IMR-90 (cell line): ENCODE measurements at regions of chr2 and their contacts with region 1.

Region 1: DNA sequence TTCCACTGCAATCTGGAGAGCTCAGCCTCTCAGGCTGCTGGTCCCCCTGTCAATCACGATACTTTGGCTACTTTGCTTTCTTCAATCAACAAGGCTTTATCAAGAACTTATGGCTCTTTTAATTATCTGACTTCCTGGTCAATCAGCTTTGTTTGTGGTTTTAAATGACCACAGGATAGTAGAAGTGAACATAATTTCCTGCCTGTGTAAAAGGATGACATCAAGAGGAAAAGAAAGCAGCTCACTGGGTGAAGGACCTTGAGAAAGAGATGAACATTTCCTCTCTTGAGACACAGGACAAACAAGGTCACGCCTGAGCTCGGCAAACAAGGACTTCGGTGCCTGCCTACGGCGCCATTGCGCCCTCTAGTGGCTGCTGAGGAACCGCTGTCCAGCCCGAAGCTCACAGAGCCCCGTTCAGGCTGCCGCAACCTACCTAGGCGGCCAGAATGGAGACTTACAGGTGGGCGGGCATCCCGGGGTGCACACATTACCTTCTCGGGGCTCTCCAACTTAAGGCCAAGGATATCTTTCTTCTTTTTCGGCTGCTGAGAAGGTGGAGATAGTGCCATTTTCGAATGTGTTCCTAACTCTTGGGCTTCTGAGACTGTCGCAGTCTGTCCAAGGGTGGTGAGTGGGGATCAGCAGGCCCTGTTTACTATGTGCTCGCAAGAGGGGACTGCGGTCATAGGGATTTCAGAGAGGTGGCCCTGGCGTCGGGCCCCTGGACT is 54.0 kb downstream of the IL1RL2 start:
- DNase-seq: peak; percentile 97
- ATAC-seq: peak; percentile 96
- H3K4me3 ChIP-seq: no peak overlapping the region
- H3K27ac ChIP-seq: peak overlapping the region; percentile 36; the same call in 1 of the 2 replicates
- H3K4me1 ChIP-seq: peaks cover 8% of the 10 kb centered on the region
- H3K27me3 ChIP-seq: no peaks in the 10 kb centered on the region
- CTCF ChIP-seq: peak; percentile 98
- POLR2A ChIP-seq: peak; percentile 36; the same call in 1 of the 2 replicates
- RAD21 ChIP-seq: peak; percentile 99

Region 2: GRCh38 chr2:101883863-101884262 is 356.9 kb before region 1 on chr2:
- CTCF ChIA-PET with region 1: interaction called, 6 read pairs
- POLR2A ChIA-PET with region 1: no interaction called
- dilution Hi-C with region 1: no loop called
- in situ Hi-C with region 1: loop called (anchors 10 kb)
- intact Hi-C with region 1: loop called (anchors 2 kb)
- DNase-seq: peak; percentile 59
- ATAC-seq: peak; percentile 80
- H3K4me3 ChIP-seq: no peak overlapping the region
- H3K27ac ChIP-seq: no peak overlapping the region
- H3K4me1 ChIP-seq: 0 out of 2 replicates have a peak, but pooled peaks cover 3% of the 10 kb centered on the region
- H3K27me3 ChIP-seq: no peaks in the 10 kb centered on the region
- CTCF ChIP-seq: peak; percentile 65
- POLR2A ChIP-seq: no peak
- RAD21 ChIP-seq: peak; percentile 57

Region 3: GRCh38 chr2:102033031-102033749 is 207.6 kb before region 1 on chr2:
- CTCF ChIA-PET with region 1: interaction called, 11 read pairs
- POLR2A ChIA-PET with region 1: no interaction called
- dilution Hi-C with region 1: no loop called
- in situ Hi-C with region 1: no loop called
- intact Hi-C with region 1: no loop called
- DNase-seq: peak; percentile 79
- ATAC-seq: peak; percentile 89
- H3K4me3 ChIP-seq: no peak overlapping the region
- H3K27ac ChIP-seq: peak overlapping the region; percentile 53
- H3K4me1 ChIP-seq: peaks cover 14% of the 10 kb centered on the region
- H3K27me3 ChIP-seq: no peaks in the 10 kb centered on the region
- CTCF ChIP-seq: 0 out of 2 replicates have a peak, but pooled peaks have one; percentile 13
- POLR2A ChIP-seq: no peak
- RAD21 ChIP-seq: 0 out of 2 replicates have a peak, but pooled peaks have one; percentile 2

Region 4: DNA sequence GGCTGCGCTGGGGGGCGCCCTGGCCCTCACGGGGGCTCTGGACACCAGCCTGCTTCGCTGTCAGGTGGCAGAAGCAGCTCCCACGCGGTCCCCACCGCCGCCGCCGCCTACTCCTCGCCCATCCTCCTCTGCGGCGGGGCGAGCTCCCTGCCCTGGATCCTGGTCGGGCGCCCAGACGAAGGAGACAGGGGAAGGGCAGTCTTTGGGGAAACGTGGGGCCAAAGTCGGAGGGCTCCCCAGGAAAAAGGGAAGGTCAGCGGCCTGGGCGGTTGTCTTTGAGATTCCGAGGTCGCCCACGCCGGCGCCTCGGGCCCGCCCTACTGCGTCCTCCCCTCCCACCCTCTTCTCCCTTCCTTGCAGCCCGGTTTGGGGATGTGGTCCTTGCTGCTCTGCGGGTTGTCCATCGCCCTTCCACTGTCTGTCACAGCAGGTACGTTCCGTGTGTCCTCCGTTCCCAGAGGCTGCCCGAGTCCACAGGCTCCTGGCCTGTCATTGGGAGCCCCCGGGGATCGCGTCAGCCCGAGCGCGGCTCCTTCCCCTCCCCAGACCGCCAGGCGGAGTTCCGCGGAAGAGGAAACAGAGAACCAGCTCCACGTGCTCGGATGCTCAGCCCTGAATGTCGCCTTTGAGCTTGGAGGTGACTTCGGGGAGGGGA is 53.2 kb before region 1 on chr2:
- CTCF ChIA-PET with region 1: interaction called, 5 read pairs
- POLR2A ChIA-PET with region 1: no interaction called
- dilution Hi-C with region 1: no loop called
- in situ Hi-C with region 1: no loop called
- intact Hi-C with region 1: loop called (anchors 1 kb)
- DNase-seq: peak; percentile 10
- ATAC-seq: peak; percentile 72
- H3K4me3 ChIP-seq: peak overlapping the region; percentile 17; the same call in 1 of the 2 replicates
- H3K27ac ChIP-seq: no peak overlapping the region
- H3K4me1 ChIP-seq: peaks cover 1% of the 10 kb centered on the region; the same call in 1 of the 2 replicates
- H3K27me3 ChIP-seq: no peaks in the 10 kb centered on the region
- CTCF ChIP-seq: no peak
- POLR2A ChIP-seq: no peak
- RAD21 ChIP-seq: no peak

Region 5: GRCh38 chr2:102442967-102443828 is 202.4 kb after region 1 on chr2:
- CTCF ChIA-PET with region 1: interaction called, 4 read pairs
- POLR2A ChIA-PET with region 1: no interaction called
- dilution Hi-C with region 1: no loop called
- in situ Hi-C with region 1: loop called (anchors 5 kb)
- intact Hi-C with region 1: no loop called
- DNase-seq: peak; percentile 39
- ATAC-seq: peak; percentile 83
- H3K4me3 ChIP-seq: no peak overlapping the region
- H3K27ac ChIP-seq: no peak overlapping the region
- H3K4me1 ChIP-seq: 0 out of 2 replicates have a peak, but pooled peaks cover 2% of the 10 kb centered on the region
- H3K27me3 ChIP-seq: peaks cover 3% of the 10 kb centered on the region; the same call in 1 of the 2 replicates
- CTCF ChIP-seq: peak; percentile 77
- POLR2A ChIP-seq: no peak
- RAD21 ChIP-seq: peak; percentile 78